Mammary epithelial cell (primary cell): ENCODE measurements at regions of chr14 and their contacts with region 1.

Region 1: DNA sequence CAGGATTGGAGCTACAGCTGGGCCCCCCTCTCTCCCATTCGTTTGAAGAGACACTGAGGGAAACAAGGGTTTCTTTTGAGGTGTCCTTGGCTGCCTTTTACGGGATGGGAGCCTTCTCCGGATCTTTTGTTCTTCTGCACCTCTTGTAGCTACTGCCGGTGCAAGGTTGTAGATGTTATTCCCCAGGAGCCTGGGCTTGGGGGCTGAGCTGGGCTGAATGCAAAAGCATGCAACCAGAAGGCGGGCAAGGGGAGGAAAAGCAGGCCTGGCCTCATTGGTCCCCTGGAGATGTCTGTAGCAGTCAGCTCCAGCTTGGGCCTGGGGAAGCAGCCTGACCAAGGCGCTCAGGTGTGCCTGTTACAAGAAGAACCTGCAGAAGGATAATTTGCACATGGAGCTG is 110.3 kb downstream of the GCH1 start:
- DNase-seq: no peak
- H3K4me3 ChIP-seq: no peak overlapping the region
- H3K27ac ChIP-seq: no peak overlapping the region
- H3K4me1 ChIP-seq: peaks cover 6% of the 10 kb centered on the region
- H3K27me3 ChIP-seq: no peaks in the 10 kb centered on the region
- CTCF ChIP-seq: no peak

Region 2: GRCh38 chr14:54564868-54565784 is 227.2 kb before region 1 on chr14:
- CTCF ChIA-PET with region 1: no interaction called
- dilution Hi-C with region 1: no loop called
- in situ Hi-C with region 1: no loop called
- intact Hi-C with region 1: no loop called
- DNase-seq: peak; percentile 73
- H3K4me3 ChIP-seq: peak overlapping the region; percentile 82 to 90 (median 86)
- H3K27ac ChIP-seq: peak overlapping the region; percentile 84
- H3K4me1 ChIP-seq: peaks cover 29% of the 10 kb centered on the region
- H3K27me3 ChIP-seq: no peaks in the 10 kb centered on the region
- CTCF ChIP-seq: peak in 1 of 2 donors; percentile 21

Region 3: GRCh38 chr14:54742492-54743350 is 49.6 kb before region 1 on chr14:
- CTCF ChIA-PET with region 1: no interaction called
- dilution Hi-C with region 1: loop called (anchors 5 kb)
- in situ Hi-C with region 1: no loop called
- intact Hi-C with region 1: no loop called
- DNase-seq: no peak
- H3K4me3 ChIP-seq: no peak overlapping the region
- H3K27ac ChIP-seq: no peak overlapping the region
- H3K4me1 ChIP-seq: peaks cover 8% of the 10 kb centered on the region
- H3K27me3 ChIP-seq: no peaks in the 10 kb centered on the region
- CTCF ChIP-seq: no peak

Region 4: GRCh38 chr14:54881235-54881760 is 89.0 kb after region 1 on chr14:
- CTCF ChIA-PET with region 1: no interaction called
- dilution Hi-C with region 1: no loop called
- in situ Hi-C with region 1: no loop called
- intact Hi-C with region 1: no loop called
- DNase-seq: peak; percentile 68
- H3K4me3 ChIP-seq: peak overlapping the region; percentile 39 to 47 (median 43)
- H3K27ac ChIP-seq: peak overlapping the region; percentile 52
- H3K4me1 ChIP-seq: peaks cover 9% of the 10 kb centered on the region
- H3K27me3 ChIP-seq: no peaks in the 10 kb centered on the region
- CTCF ChIP-seq: no peak